CD4-positive, alpha-beta T cell (primary cell): ENCODE measurements at regions of chr22 and their contacts with region 1.

Region 1: DNA sequence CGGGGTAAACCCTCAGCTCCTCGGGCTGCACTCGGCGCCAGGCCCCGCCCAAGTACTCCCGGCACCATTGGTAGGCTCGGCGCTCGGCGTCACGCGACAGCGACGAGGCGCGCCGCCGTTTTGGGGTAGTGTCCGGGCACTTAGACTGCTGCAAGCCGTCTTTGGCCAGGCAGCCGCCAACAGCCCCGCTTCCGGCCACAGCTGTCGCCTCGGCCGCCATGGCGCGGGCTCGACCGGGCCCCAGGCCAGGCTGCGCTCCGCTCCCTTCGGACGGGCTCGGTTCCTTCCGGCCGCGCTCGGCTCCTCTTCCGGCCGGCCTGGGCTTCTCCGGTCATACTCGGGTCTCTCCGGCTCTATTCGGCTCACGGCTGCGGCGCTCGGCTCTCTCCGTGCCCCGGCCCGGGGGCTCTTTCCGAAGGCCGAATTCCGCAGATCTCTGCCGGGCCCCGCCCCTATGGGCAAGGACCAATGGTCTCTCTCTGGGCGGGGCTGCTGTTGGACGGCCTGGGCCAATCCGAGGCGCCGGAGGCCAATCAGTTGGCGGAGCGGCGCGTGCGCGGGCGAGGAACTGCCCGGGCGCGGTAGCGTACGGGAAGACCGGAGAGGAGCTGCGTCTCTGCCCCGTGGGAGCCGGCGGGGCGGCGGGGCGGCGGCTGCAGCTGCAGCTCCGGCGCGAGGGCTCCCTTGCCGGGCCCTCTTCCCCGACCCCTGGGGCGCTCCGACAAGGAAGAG is at the start of gene CHKB:
- DNase-seq: peak; percentile 95 to 99 (median 98)
- ATAC-seq: peak; percentile 92
- H3K4me3 ChIP-seq: peak within 1 kb of the TSS; percentile 63
- H3K4me3 Mint-ChIP-seq: peak within 1 kb of the TSS; percentile 100
- H3K27ac ChIP-seq: peak within 1 kb of the TSS; percentile 91 to 95
- H3K27ac Mint-ChIP-seq: peak within 1 kb of the TSS; percentile 98
- H3K4me1 ChIP-seq: peaks cover 31% of the 10 kb centered on the region
- H3K4me1 Mint-ChIP-seq: peaks cover 35% of the 10 kb centered on the region
- H3K27me3 ChIP-seq: no peaks in the 10 kb centered on the region
- H3K27me3 Mint-ChIP-seq: no peaks in the 10 kb centered on the region
- CTCF ChIP-seq: no peak
- total RNA-seq, gene CHKB: 152 to 156 TPM

Region 2: GRCh38 chr22:50537765-50538164 is 45.0 kb before region 1 on chr22:
- CTCF ChIA-PET with region 1: no interaction called
- POLR2A ChIA-PET with region 1: interaction called, 16 read pairs
- intact Hi-C with region 1: no loop called
- DNase-seq: no peak
- ATAC-seq: no peak
- H3K4me3 ChIP-seq: no peak overlapping the region
- H3K4me3 Mint-ChIP-seq: no peak overlapping the region
- H3K27ac ChIP-seq: peak overlapping the region; percentile 92 to 99
- H3K27ac Mint-ChIP-seq: peak overlapping the region; percentile 99
- H3K4me1 ChIP-seq: peaks cover 51% of the 10 kb centered on the region
- H3K4me1 Mint-ChIP-seq: peaks cover 43% of the 10 kb centered on the region
- H3K27me3 ChIP-seq: no peaks in the 10 kb centered on the region
- H3K27me3 Mint-ChIP-seq: peaks cover 9% of the 10 kb centered on the region
- CTCF ChIP-seq: no peak

Region 3: DNA sequence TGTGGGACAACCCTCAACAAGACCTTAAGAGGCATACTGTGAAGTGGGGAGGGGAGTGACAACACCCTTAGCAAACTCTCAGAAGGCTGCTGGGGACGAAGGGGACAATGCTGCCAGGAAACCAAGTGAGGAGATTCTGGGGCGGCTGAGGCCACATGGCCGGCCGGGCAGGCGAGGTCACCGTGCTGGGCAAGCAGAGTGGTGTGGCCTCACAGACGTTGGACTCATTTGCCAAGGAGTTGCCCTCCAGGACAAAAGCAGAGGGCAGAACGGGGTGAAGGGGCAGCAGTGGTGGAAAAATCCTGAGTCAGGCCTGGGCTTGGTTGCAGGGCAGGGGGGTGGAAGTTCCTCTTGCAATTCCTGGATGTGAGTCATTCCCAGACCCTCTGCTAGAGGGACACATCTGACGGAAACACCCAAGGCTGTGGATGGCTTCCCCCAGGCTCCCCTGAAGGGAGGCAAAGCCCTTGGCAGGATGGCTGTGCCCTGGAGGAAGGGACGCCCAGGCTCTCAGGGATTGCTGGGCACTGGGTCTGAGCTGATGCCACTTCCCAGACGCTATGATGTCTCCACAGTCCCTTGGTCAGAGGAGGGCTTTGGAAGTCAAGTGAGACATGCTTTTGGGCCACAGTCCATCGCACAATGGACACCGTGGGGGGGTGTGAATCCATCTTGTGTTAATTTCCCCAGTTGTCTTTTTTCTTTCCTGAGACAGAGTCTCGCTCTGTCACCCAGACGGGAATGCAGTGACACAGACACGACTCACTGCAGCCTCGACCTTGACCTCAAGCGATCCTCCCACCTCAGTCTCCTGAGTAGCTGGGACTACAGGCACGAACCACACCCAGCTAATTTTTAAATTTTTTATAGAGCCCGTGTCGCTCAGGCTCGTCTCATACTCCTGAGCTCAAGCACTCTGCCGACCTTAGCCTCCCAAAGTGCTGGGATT is 73.7 kb after region 1 on chr22:
- CTCF ChIA-PET with region 1: no interaction called
- POLR2A ChIA-PET with region 1: no interaction called
- intact Hi-C with region 1: no loop called
- DNase-seq: no peak
- ATAC-seq: no peak
- H3K4me3 ChIP-seq: no peak overlapping the region
- H3K4me3 Mint-ChIP-seq: no peak overlapping the region
- H3K27ac ChIP-seq: no peak overlapping the region
- H3K27ac Mint-ChIP-seq: no peak overlapping the region
- H3K4me1 ChIP-seq: no peaks in the 10 kb centered on the region
- H3K4me1 Mint-ChIP-seq: no peaks in the 10 kb centered on the region
- H3K27me3 ChIP-seq: peaks cover 5% of the 10 kb centered on the region in 2 experiments
- H3K27me3 Mint-ChIP-seq: peaks cover 29% of the 10 kb centered on the region
- CTCF ChIP-seq: no peak